Lower lobe of right lung (tissue), 2 donors: ENCODE measurements at regions of chr11 and their contacts with region 1.

Region 1: GRCh38 chr11:121591405-121592033 is 138.8 kb upstream of the SORL1-AS1 start:
- DNase-seq: no peak
- ATAC-seq: peak; percentile 79 to 81
- H3K4me3 ChIP-seq: no peak overlapping the region
- H3K27ac ChIP-seq: no peak overlapping the region
- H3K4me1 ChIP-seq: peaks cover 9% of the 10 kb centered on the region
- H3K27me3 ChIP-seq: no peaks in the 10 kb centered on the region
- CTCF ChIP-seq: peak; percentile 88

Region 2: GRCh38 chr11:121318848-121319834 is 272.4 kb before region 1 on chr11:
- intact Hi-C with region 1: loop called (anchors 10 kb)
- DNase-seq: no peak
- ATAC-seq: peak; percentile 61 to 84
- H3K4me3 ChIP-seq: no peak overlapping the region
- H3K27ac ChIP-seq: no peak overlapping the region
- H3K4me1 ChIP-seq: no peaks in the 10 kb centered on the region
- H3K27me3 ChIP-seq: no peaks in the 10 kb centered on the region
- CTCF ChIP-seq: peak; percentile 70